ENCODE measurements at regions of chr2 and their contacts with region 1.

Region 1: DNA sequence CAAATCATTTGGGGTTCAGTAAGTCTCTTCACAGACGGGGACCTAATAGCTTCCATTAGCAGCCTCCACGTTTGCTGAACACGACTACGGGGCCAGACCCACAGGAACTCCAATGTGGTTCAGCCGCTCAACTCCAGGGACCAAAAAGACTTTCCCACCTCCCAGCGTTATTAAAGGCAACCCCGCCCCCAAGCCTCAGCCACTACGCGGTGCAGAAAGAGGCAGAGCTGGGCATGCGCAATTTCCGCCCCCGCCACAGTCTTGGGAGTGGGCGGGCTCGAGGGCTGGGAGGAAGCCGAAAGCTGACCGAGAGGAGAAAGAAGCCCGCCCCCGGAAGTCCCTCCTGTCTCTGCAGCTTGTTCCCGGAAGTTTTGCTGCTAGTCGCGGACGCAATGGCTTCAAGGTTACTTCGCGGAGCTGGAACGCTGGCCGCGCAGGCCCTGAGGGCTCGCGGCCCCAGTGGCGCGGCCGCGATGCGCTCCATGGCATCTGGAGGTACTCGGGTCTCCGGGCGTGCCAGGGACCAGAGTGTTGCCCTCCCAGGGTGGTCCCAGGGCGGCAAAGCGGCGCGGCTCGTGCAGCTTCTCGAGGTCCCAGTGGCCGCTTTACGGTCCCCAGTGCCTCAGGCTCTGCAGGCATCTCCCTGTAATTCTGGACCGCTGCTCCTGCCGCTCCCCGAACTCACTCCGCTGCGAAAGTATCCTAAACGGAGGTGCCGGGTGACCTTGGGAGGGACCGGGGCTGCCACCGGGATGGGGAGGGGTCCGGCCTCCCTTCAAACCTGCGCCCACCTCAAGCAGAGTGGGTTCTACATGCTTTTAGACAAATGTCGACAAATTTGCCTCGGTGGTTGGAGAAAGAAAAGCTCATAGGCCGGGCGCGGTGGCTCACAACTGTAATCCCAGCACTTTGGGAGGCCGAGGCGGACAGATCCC is at the start of gene COX5B:
- DNase-seq: peak; percentile 99 to 100 (median 99)
- ATAC-seq: peak; percentile 98 to 100 (median 100)
- H3K4me3 ChIP-seq: peak within 1 kb of the TSS; percentile 71 to 100 (median 88)
- H3K27ac ChIP-seq: peak within 1 kb of the TSS; percentile 92 to 99 (median 97)
- H3K4me1 ChIP-seq: peaks cover 0 to 27% (median 14%) of the 10 kb centered on the region in 12 donors
- H3K27me3 ChIP-seq: no peaks in the 10 kb centered on the region
- CTCF ChIP-seq: peak in 1 of 12 donors; percentile 14
- POLR2A ChIP-seq: peak; percentile 27 to 92
- total RNA-seq, gene COX5B: 745 to 2,539 (median 1,214) TPM

Region 2: DNA sequence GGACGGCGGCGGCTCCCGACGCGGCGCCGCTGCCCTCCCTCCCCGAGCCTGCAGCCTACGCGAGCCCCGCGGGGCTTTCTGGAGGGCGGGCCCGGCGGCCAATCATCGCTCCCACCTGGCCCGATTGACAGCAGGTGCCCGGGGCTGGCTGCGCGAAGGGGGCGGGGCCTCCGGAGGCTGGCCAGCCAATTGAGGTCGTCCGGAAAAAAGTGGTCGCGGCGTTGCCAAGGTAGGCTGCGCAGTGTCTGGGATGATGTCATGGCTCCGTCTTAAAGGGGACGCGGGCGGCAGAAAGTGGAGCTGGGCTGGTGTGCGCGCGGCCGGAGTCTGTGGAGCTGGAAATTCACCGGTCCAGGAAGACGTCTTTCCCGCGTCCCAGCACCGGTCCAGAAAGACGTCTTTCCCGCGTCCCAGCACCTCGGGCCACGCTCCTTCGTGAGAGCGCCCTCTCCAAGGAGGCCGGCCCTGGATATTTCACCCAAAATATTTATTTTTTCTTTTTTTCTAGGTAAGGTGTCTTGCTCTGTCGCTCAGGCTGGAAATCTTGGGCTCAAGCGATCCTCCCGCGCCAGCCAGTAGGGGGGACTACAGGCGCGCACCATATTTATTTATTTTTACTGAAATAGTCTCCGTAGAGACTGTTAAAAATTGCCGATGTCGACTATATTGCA is 18.1 kb after region 1 on chr2 and contains the start of gene ACTR1B:
- intact Hi-C with region 1: loop called in 9 of 10 experiments (anchors 1 to 2 kb)
- DNase-seq: peak; percentile 98 to 99 (median 98)
- ATAC-seq: peak; percentile 96 to 98 (median 96)
- H3K4me3 ChIP-seq: peak within 1 kb of the TSS; percentile 57 to 98 (median 68)
- H3K27ac ChIP-seq: peak within 1 kb of the TSS; percentile 88 to 99 (median 96)
- H3K4me1 ChIP-seq: peaks cover 4 to 38% (median 30%) of the 10 kb centered on the region in 12 donors
- H3K27me3 ChIP-seq: no peaks in the 10 kb centered on the region
- CTCF ChIP-seq: peak; percentile 32 to 76 (median 58)
- POLR2A ChIP-seq: peak in 1 of 2 donors; percentile 95
- total RNA-seq, gene ACTR1B: 62.1 to 84.1 (median 74.9) TPM

Region 3: DNA sequence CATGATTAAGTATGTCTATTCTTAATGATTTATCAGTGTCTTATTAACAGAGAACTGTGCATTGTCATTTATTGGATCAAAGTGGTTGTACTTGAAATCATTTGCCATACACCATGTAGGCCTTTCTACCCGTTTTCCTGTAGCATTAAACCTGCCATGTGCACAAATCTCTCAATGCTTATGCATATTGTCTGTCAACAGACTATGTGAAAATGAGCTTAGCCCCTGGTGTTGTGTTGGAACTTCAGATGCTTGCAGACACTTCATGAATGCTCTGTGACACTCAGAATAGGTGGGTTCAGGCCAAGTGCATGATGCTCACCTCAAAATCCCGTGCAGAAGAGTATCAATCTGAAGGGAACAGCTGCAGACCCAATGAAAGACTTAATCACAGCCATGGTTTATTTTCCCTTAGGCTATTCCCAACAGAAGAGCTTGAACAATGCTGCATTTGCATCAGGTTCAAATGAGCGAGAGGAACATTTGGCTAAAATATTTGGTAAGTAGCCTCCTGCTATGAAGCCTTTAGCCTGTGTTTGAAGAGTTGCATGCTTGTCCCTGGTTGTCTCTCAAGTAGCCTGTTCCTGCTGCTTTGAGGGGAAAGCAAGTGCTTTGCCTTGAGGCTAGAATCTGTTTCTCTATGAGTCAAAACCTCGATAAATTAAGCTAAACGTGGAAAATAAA is 29.6 kb after region 1 on chr2:
- intact Hi-C with region 1: loop called in 1 of 10 experiments (anchors 5 kb)
- DNase-seq: no peak
- ATAC-seq: no peak
- H3K4me3 ChIP-seq: no peak overlapping the region
- H3K27ac ChIP-seq: no peak overlapping the region
- H3K4me1 ChIP-seq: no peaks in the 10 kb centered on the region
- H3K27me3 ChIP-seq: peaks cover 0 to 2% (median 0%) of the 10 kb centered on the region in 9 donors
- CTCF ChIP-seq: no peak
- POLR2A ChIP-seq: no peak